WTC11 (cell line): ENCODE measurements at regions of chr18 and their contacts with region 1.

Region 1: GRCh38 chr18:10787293-10787901 is 261.6 kb downstream of the NAPG start:
- DNase-seq: peak; percentile 86
- ATAC-seq: peak; percentile 38; the same call in 1 of the 2 replicates
- H3K4me3 Mint-ChIP-seq: no peak overlapping the region
- H3K27ac Mint-ChIP-seq: no peak overlapping the region
- H3K4me1 Mint-ChIP-seq: peaks cover 7% of the 10 kb centered on the region
- H3K27me3 Mint-ChIP-seq: no peaks in the 10 kb centered on the region
- CTCF ChIP-seq: peak; percentile 72

Region 2: DNA sequence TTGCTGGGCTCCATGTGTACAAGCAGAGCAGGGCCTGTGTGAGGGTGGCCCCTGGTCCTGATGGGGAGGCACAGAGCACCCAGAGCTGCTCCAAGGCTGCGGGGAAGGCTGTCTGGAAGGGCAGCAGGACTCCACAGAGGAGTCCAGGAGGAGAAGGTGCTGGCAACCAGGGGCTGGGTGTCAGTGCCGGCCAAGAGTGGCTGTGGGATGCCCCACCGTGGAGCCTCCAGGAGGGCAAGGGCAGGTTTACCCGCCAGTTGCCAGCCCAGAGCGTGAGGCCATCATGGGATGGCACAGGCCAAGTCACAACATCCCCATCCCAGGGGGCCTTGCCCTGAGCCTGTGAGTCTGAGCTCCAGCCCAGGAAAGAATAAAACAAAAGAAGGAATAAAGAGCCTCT is 19.7 kb before region 1 on chr18:
- CTCF ChIA-PET with region 1: no interaction called
- POLR2A ChIA-PET with region 1: no interaction called
- DNase-seq: no peak
- ATAC-seq: no peak
- H3K4me3 Mint-ChIP-seq: no peak overlapping the region
- H3K27ac Mint-ChIP-seq: no peak overlapping the region
- H3K4me1 Mint-ChIP-seq: no peaks in the 10 kb centered on the region
- H3K27me3 Mint-ChIP-seq: no peaks in the 10 kb centered on the region; the same call in 1 of the 2 replicates
- CTCF ChIP-seq: no peak

Region 3: GRCh38 chr18:10798727-10799308 is 11.4 kb after region 1 on chr18:
- CTCF ChIA-PET with region 1: interaction called, 11 read pairs
- POLR2A ChIA-PET with region 1: no interaction called
- DNase-seq: no peak
- ATAC-seq: no peak; the same call in 1 of the 2 replicates
- H3K4me3 Mint-ChIP-seq: no peak overlapping the region
- H3K27ac Mint-ChIP-seq: 0 out of 2 replicates have a peak overlapping the region, but pooled peaks have one; percentile 68
- H3K4me1 Mint-ChIP-seq: peaks cover 35% of the 10 kb centered on the region
- H3K27me3 Mint-ChIP-seq: no peaks in the 10 kb centered on the region
- CTCF ChIP-seq: no peak